ENCODE measurements at regions of chr12 and their contacts with region 1.

Region 1: GRCh38 chr12:3299929-3300832 is 190.8 kb upstream of the PRMT8 start:
- DNase-seq: peak; percentile 95
- H3K4me3 ChIP-seq: peak overlapping the region; percentile 10; the same call in 1 of the 2 replicates
- H3K27me3 ChIP-seq: no peaks in the 10 kb centered on the region
- CTCF ChIP-seq: peak; percentile 99

Region 2: DNA sequence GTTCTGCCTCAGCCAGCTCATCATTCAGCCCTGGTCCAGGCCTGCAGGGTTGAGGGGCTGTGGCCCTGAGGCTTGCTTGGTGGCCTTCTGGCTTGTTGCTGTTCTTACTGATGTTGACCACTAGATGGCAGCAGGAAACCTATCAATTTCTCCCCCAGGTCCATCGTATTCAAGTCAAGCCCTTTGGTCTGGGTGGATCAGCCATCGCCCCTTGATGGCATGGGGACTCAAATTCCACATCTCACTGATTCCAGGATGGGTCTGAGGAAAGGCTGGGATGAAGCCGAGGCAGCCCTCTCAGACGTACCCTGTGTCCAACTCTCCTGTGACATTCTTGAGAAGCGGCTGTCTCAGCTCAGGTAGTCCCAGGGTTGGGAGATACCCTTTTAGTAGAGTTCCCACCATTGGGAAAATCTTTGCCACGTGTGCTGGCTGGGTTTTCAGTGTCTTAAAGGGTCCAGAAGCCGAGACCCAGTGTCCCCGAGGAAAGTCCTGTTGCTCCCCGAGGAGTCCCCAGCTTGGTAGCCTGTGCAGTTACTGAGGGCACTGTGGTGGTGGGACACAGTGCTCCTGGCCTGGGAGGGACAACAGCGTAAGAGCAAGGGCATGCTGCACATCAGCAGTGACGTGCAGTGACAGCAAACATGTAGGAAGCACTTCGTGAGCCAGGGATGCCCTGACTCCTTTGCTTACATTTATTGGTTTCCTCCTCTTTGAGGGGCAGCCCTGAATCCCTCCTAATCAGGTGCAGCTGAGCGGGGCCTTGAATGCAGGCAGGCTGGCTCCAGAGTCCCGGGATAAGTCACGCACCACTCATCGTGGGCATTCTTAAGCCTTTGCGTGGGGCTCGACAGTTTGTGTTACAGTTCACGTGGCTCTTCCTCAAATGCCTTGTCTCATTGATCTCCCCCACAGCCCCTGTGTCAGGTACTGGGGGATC is 164.4 kb before region 1 on chr12:
- CTCF ChIA-PET with region 1: interaction called, 27 read pairs
- POLR2A ChIA-PET with region 1: no interaction called
- DNase-seq: no peak
- H3K4me3 ChIP-seq: no peak overlapping the region
- H3K27me3 ChIP-seq: no peaks in the 10 kb centered on the region
- CTCF ChIP-seq: peak; percentile 74

Region 3: GRCh38 chr12:3313675-3314663 is 13.8 kb after region 1 on chr12:
- CTCF ChIA-PET with region 1: interaction called, 96 read pairs
- POLR2A ChIA-PET with region 1: no interaction called
- DNase-seq: no peak
- H3K4me3 ChIP-seq: no peak overlapping the region
- H3K27me3 ChIP-seq: no peaks in the 10 kb centered on the region; the same call in 1 of the 2 replicates
- CTCF ChIP-seq: peak; percentile 54; the same call in 1 of the 2 replicates

Region 4: GRCh38 chr12:3680896-3681594 is 380.9 kb after region 1 on chr12:
- CTCF ChIA-PET with region 1: interaction called, 11 read pairs
- POLR2A ChIA-PET with region 1: no interaction called
- DNase-seq: no peak
- H3K4me3 ChIP-seq: no peak overlapping the region
- H3K27me3 ChIP-seq: no peaks in the 10 kb centered on the region
- CTCF ChIP-seq: no peak

Region 5: GRCh38 chr12:3770886-3771285 is 470.7 kb after region 1 on chr12:
- CTCF ChIA-PET with region 1: interaction called, 134 read pairs
- POLR2A ChIA-PET with region 1: no interaction called
- DNase-seq: no peak
- H3K4me3 ChIP-seq: no peak overlapping the region
- H3K27me3 ChIP-seq: no peaks in the 10 kb centered on the region; the same call in 1 of the 2 replicates
- CTCF ChIP-seq: no peak

Region 6: DNA sequence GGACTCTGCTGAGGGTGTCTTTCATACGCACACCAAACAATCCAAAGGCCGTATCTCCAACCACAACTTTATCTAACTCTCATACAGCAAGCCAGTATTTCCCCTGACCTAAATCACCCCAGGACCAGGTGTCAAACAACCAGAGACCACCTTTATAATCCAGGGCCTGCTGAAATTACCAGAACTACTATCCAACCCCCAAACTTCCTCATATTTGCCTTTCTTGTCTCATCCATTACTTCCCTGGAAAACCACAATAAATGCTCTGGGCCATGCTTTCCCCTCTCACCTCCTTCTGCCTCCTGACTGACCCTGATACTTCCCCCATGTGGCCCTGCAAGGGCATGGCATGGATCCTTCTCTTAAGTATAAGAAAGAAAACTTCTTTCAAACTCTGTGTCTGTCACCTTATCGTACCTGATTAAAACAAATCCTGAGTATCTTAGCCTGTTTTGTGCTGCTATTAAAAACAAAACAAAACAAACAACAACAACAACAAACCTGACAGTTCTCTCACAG is 497.4 kb after region 1 on chr12:
- CTCF ChIA-PET with region 1: interaction called, 61 read pairs
- POLR2A ChIA-PET with region 1: no interaction called
- DNase-seq: no peak
- H3K4me3 ChIP-seq: no peak overlapping the region
- H3K27me3 ChIP-seq: no peaks in the 10 kb centered on the region
- CTCF ChIP-seq: no peak

Region 7: GRCh38 chr12:3820122-3820521 is 519.9 kb after region 1 on chr12:
- CTCF ChIA-PET with region 1: interaction called, 10 read pairs
- POLR2A ChIA-PET with region 1: no interaction called
- DNase-seq: no peak
- H3K4me3 ChIP-seq: no peak overlapping the region
- H3K27me3 ChIP-seq: no peaks in the 10 kb centered on the region
- CTCF ChIP-seq: no peak